Prostate gland (tissue), 2 donors: ENCODE measurements at regions of chr2 and their contacts with region 1.

Region 1: GRCh38 chr2:61470965-61471904 is at the start of gene USP34:
- DNase-seq: peak; percentile 93
- H3K4me3 ChIP-seq: peak within 1 kb of the TSS; percentile 55 to 96
- H3K27ac ChIP-seq: peak within 1 kb of the TSS; percentile 95 to 99
- H3K4me1 ChIP-seq: no peaks in the 10 kb centered on the region
- H3K27me3 ChIP-seq: no peaks in the 10 kb centered on the region
- CTCF ChIP-seq: peak in 2 of 4 experiments; percentile 16 to 32
- POLR2A ChIP-seq: peak; percentile 88
- total RNA-seq, gene USP34: 94.1 to 206 TPM

Region 2: DNA sequence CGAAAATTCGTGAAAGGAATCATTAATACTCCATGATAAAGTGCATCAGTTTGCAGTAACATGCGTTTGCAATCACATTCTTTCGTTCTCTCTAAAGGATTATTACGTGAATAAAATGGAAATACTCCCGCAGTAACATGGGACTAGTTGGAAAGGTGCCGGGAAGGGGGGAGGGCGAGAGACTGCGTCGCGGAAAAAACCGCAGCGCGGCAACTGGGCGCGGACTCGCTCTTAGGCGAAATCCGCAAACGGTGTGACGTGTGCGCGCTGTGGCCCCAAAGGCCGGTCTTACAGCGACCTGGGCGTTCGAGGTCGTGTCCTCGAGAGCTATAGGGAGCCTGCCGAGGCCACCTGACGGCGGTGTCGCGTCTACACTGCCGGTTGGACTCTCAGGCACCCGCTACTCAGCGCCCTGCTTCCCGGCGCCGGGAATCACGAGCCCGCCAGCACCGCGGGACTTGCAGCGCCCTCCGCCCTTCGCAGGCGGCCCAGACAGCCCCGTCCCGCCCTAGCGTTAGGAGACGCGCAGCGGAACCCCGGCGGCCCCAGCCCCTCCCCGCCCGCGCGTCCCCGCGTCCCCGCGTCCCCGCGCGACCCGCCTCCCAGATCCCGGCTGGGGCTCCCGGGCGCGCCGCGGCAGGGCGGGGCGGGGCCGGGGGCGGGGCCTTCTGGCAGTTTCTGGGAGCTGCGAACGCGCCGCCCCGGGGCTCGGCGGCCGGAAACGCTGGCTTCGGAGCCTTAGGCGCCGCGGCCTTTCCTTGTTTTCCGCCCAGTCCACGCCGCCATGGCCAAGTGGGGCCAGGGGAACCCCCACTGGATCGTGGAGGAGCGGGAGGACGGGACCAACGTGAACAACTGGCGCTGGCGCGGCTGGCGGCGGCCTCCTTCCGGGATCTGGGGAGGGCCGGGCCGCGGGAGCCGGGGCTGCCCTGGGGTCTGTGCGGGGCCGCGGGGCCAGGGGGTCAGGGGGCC is 294.2 kb before region 1 on chr2:
- intact Hi-C with region 1: loop called (anchors 10 kb)
- DNase-seq: peak; percentile 89
- H3K4me3 ChIP-seq: peak overlapping the region; percentile 88 to 93
- H3K27ac ChIP-seq: peak overlapping the region; percentile 99 to 100
- H3K4me1 ChIP-seq: peaks cover 11% of the 10 kb centered on the region
- H3K27me3 ChIP-seq: no peaks in the 10 kb centered on the region
- CTCF ChIP-seq: peak in 3 of 4 experiments; percentile 12 to 34 (median 27)
- POLR2A ChIP-seq: peak; percentile 92